ENCODE measurements at regions of chr9 and their contacts with region 1.

Region 1: GRCh38 chr9:123550797-123551196 is 194.8 kb downstream of the CRB2 start:
- DNase-seq: no peak
- H3K4me3 ChIP-seq: no peak overlapping the region
- H3K27ac ChIP-seq: no peak overlapping the region
- H3K4me1 ChIP-seq: no peaks in the 10 kb centered on the region
- H3K27me3 ChIP-seq: no peaks in the 10 kb centered on the region
- CTCF ChIP-seq: no peak
- EP300 ChIP-seq: no peak
- POLR2A ChIP-seq: no peak

Region 2: DNA sequence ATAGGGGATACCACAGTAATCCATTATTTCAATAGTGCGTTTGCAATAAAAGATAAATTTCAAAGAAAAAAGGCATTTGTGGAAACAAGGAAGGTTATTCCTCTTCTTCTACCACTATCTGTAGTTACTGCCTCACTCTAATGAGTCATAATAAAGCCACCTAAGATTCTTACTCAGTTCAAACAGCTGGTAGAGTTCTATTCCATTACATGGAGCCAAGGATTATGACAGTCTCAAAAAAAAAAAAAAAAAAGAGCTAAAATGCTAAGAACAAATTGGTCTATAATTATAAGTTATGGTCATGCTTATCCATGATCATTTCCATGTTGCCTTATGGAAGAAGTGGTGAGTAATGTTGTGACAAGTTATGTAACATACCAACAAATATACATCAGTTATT is 332.8 kb after region 1 on chr9:
- in situ Hi-C with region 1: no loop called
- intact Hi-C with region 1: no loop called
- DNase-seq: no peak
- H3K4me3 ChIP-seq: no peak overlapping the region
- H3K27ac ChIP-seq: no peak overlapping the region
- H3K4me1 ChIP-seq: no peaks in the 10 kb centered on the region
- H3K27me3 ChIP-seq: no peaks in the 10 kb centered on the region
- CTCF ChIP-seq: no peak
- EP300 ChIP-seq: no peak
- POLR2A ChIP-seq: no peak

Region 3: GRCh38 chr9:125200210-125201047 is 1649.6 kb after region 1 on chr9 and contains the start of gene RABEPK:
- in situ Hi-C with region 1: no loop called
- intact Hi-C with region 1: loop called (anchors 10 kb)
- DNase-seq: peak; percentile 95
- H3K4me3 ChIP-seq: peak within 1 kb of the TSS; percentile 52 to 77 (median 62)
- H3K27ac ChIP-seq: peak within 1 kb of the TSS; percentile 89 to 99 (median 95)
- H3K4me1 ChIP-seq: peaks cover 0 to 18% (median 15%) of the 10 kb centered on the region in 4 donors
- H3K27me3 ChIP-seq: no peaks in the 10 kb centered on the region
- CTCF ChIP-seq: no peak
- EP300 ChIP-seq: no peak
- POLR2A ChIP-seq: peak; percentile 93
- total RNA-seq, gene RABEPK: 5.2 to 8.7 (median 8.6) TPM in 3 of 4 donors, not detected in the other

Measured in transverse colon (tissue), 4 donors.